AG04449 (cell line): ENCODE measurements at regions of chr20 and their contacts with region 1.

Region 1: GRCh38 chr20:59042796-59043660 is 442 bp upstream of the PRELID3B start:
- DNase-seq: no peak
- H3K4me3 ChIP-seq: peak overlapping the region; percentile 81
- CTCF ChIP-seq: no peak

Region 2: GRCh38 chr20:58976061-58977028 is 66.7 kb before region 1 on chr20:
- CTCF ChIA-PET with region 1: no interaction called
- POLR2A ChIA-PET with region 1: no interaction called
- DNase-seq: no peak
- H3K4me3 ChIP-seq: no peak overlapping the region
- CTCF ChIP-seq: no peak

Region 3: GRCh38 chr20:59055295-59055694 is 12.3 kb after region 1 on chr20:
- CTCF ChIA-PET with region 1: interaction called, 11 read pairs
- POLR2A ChIA-PET with region 1: no interaction called
- DNase-seq: no peak
- H3K4me3 ChIP-seq: no peak overlapping the region
- CTCF ChIP-seq: peak; percentile 23